CD4-positive, alpha-beta memory T cell (primary cell): ENCODE measurements at regions of chr1 and their contacts with region 1.

Region 1: GRCh38 chr1:8941906-8942305 is 3.8 kb upstream of the CA6 start:
- DNase-seq: no peak
- H3K4me3 ChIP-seq: no peak overlapping the region
- H3K4me3 Mint-ChIP-seq: no peak overlapping the region
- H3K27ac ChIP-seq: no peak overlapping the region
- H3K27ac Mint-ChIP-seq: no peak overlapping the region
- H3K4me1 ChIP-seq: peaks cover 55% of the 10 kb centered on the region
- H3K4me1 Mint-ChIP-seq: peaks cover 34 to 66% (median 48%) of the 10 kb centered on the region in 4 donors
- H3K27me3 ChIP-seq: no peaks in the 10 kb centered on the region
- H3K27me3 Mint-ChIP-seq: no peaks in the 10 kb centered on the region

Region 2: DNA sequence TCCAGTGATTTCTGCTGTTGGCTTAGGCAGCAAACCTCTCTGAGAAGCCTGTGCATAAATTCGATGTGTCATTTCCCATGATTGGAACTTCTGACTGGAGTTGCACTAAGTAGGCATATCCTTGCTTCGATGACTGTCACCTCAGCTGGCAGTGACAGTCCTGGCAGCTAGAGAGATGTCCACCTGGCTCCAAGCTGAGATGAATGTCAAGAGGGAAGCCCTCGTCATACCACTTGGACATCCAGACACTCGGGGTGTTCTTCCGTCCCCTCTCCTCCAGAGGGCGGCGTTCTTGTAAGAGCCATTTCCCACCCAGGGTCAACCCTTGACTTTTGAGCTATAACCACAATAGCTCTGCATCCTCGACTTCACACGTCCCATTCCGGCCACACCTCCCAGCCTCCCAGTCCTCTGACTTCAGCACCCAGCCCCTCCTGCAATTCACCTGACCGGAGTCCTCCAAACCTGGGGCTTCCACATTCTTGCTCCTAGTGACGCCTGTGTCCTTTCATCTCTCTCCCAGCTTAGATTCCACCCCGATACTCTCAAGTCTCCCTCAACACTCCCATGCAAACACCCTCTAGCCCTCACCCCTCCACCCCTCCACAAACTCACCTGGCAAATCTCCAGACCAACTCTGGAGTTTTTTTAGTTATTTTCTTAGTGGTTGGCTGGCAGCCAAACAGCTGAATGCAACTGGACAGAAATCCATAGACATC is 21.1 kb after region 1 on chr1:
- CTCF ChIA-PET with region 1: interaction called, 26 read pairs
- POLR2A ChIA-PET with region 1: interaction called, 12 read pairs
- intact Hi-C with region 1: no loop called
- DNase-seq: no peak
- H3K4me3 ChIP-seq: no peak overlapping the region
- H3K4me3 Mint-ChIP-seq: peak overlapping the region in 5 of 8 donors; percentile 3 to 64 (median 51)
- H3K27ac ChIP-seq: no peak overlapping the region
- H3K27ac Mint-ChIP-seq: peak overlapping the region in 5 of 7 donors; percentile 34 to 74 (median 57)
- H3K4me1 ChIP-seq: peaks cover 29% of the 10 kb centered on the region
- H3K4me1 Mint-ChIP-seq: peaks cover 26 to 63% (median 38%) of the 10 kb centered on the region in 4 donors
- H3K27me3 ChIP-seq: no peaks in the 10 kb centered on the region
- H3K27me3 Mint-ChIP-seq: peaks cover 0 to 3% of the 10 kb centered on the region in 2 donors